ENCODE measurements at regions of chr6 and their contacts with region 1.

Region 1: GRCh38 chr6:131923356-131923755 is 27.8 kb downstream of the CCN2 start:
- DNase-seq: peak; percentile 80
- ATAC-seq: peak; percentile 91
- H3K4me3 ChIP-seq: no peak overlapping the region
- H3K27ac ChIP-seq: no peak overlapping the region
- H3K4me1 ChIP-seq: no peaks in the 10 kb centered on the region
- H3K27me3 ChIP-seq: no peaks in the 10 kb centered on the region
- CTCF ChIP-seq: peak; percentile 91
- EP300 ChIP-seq: no peak
- POLR2A ChIP-seq: no peak
- RAD21 ChIP-seq: peak; percentile 86

Region 2: GRCh38 chr6:131773284-131773950 is 149.9 kb before region 1 on chr6:
- CTCF ChIA-PET with region 1: no interaction called
- POLR2A ChIA-PET with region 1: no interaction called
- in situ Hi-C with region 1: no loop called
- intact Hi-C with region 1: no loop called
- DNase-seq: no peak
- ATAC-seq: no peak
- H3K4me3 ChIP-seq: no peak overlapping the region
- H3K27ac ChIP-seq: no peak overlapping the region
- H3K4me1 ChIP-seq: peaks cover 65% of the 10 kb centered on the region
- H3K27me3 ChIP-seq: no peaks in the 10 kb centered on the region
- CTCF ChIP-seq: no peak
- EP300 ChIP-seq: no peak
- POLR2A ChIP-seq: no peak
- RAD21 ChIP-seq: no peak

Region 3: GRCh38 chr6:131966443-131966842 is 43.1 kb after region 1 on chr6:
- CTCF ChIA-PET with region 1: no interaction called
- POLR2A ChIA-PET with region 1: no interaction called
- in situ Hi-C with region 1: no loop called
- intact Hi-C with region 1: no loop called
- DNase-seq: no peak
- ATAC-seq: no peak
- H3K4me3 ChIP-seq: no peak overlapping the region
- H3K27ac ChIP-seq: no peak overlapping the region
- H3K4me1 ChIP-seq: peaks cover 50% of the 10 kb centered on the region
- H3K27me3 ChIP-seq: no peaks in the 10 kb centered on the region
- CTCF ChIP-seq: no peak
- EP300 ChIP-seq: no peak
- POLR2A ChIP-seq: no peak
- RAD21 ChIP-seq: no peak

Region 4: GRCh38 chr6:131979515-131980337 is 56.4 kb after region 1 on chr6:
- CTCF ChIA-PET with region 1: no interaction called
- POLR2A ChIA-PET with region 1: no interaction called
- in situ Hi-C with region 1: no loop called
- intact Hi-C with region 1: loop called (anchors 1 kb)
- DNase-seq: no peak
- ATAC-seq: no peak
- H3K4me3 ChIP-seq: no peak overlapping the region
- H3K27ac ChIP-seq: peak overlapping the region; percentile 98
- H3K4me1 ChIP-seq: peaks cover 97% of the 10 kb centered on the region
- H3K27me3 ChIP-seq: no peaks in the 10 kb centered on the region
- CTCF ChIP-seq: no peak
- EP300 ChIP-seq: no peak
- POLR2A ChIP-seq: no peak
- RAD21 ChIP-seq: no peak

Region 5: DNA sequence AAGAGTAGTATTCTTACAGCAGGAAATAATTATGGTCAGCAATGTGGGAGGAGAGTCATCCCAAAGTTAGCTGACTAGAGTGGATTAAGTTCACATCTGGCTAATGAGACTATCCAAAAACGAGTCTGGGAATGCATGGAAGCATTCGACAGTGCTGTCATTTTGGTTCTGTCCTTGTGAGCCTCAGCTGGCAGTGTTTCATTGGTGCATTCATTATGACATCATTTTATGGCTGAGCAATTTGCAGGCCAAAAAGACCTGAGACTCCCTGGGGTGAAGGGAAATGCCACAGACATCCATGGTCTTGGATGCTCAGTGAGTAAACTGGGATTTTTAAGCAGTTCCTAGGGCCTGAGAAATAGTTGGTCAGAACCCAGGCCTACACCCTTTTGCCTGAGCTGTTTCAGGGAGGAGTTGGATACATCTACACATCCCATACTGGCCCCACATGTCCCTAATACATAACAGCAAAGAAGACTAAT is 224.2 kb after region 1 on chr6:
- CTCF ChIA-PET with region 1: no interaction called
- POLR2A ChIA-PET with region 1: no interaction called
- in situ Hi-C with region 1: no loop called
- intact Hi-C with region 1: no loop called
- DNase-seq: no peak
- ATAC-seq: no peak
- H3K4me3 ChIP-seq: no peak overlapping the region
- H3K27ac ChIP-seq: no peak overlapping the region
- H3K4me1 ChIP-seq: no peaks in the 10 kb centered on the region
- H3K27me3 ChIP-seq: peaks cover 0 to 3% of the 10 kb centered on the region in 2 experiments; a peak in 1 of 5 replicates
- CTCF ChIP-seq: no peak
- EP300 ChIP-seq: no peak
- POLR2A ChIP-seq: no peak
- RAD21 ChIP-seq: no peak

Region 6: DNA sequence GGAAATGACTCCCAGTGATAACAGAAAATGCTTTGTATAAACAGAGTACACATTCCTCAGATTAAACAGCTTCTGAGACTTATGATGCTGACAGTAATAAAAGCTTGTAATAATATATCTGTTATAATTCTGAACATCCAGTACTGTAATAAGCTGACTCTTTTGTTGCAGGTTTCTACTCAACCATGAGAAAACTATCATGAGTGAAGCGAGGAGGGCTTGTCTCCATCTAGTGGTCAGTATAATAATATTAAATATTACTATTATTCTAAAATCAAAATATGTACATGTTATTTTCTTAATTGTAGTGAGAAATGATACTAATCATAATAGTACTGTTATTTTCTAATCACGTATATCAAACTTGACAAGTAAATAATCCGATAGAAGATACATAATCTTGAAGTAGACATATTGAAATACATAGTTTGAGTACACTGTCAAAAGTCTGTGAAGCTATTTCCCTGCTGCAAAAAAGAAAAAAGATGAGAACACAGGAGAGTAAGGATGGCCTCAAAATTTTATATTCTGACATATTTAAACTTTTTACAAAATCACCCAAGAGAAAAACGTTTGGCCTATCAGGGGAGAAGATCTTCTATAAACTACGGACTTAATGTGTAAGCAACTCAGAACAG is 294.8 kb after region 1 on chr6:
- CTCF ChIA-PET with region 1: interaction called, 95 read pairs
- POLR2A ChIA-PET with region 1: no interaction called
- in situ Hi-C with region 1: loop called (anchors 5 kb)
- intact Hi-C with region 1: loop called (anchors 1 kb)
- DNase-seq: peak; percentile 25
- ATAC-seq: no peak
- H3K4me3 ChIP-seq: no peak overlapping the region
- H3K27ac ChIP-seq: no peak overlapping the region
- H3K4me1 ChIP-seq: no peaks in the 10 kb centered on the region
- H3K27me3 ChIP-seq: peaks cover 0 to 6% of the 10 kb centered on the region in 2 experiments; a peak in 2 of 5 replicates
- CTCF ChIP-seq: peak; percentile 44
- EP300 ChIP-seq: no peak
- POLR2A ChIP-seq: no peak
- RAD21 ChIP-seq: peak; percentile 55

Region 7: DNA sequence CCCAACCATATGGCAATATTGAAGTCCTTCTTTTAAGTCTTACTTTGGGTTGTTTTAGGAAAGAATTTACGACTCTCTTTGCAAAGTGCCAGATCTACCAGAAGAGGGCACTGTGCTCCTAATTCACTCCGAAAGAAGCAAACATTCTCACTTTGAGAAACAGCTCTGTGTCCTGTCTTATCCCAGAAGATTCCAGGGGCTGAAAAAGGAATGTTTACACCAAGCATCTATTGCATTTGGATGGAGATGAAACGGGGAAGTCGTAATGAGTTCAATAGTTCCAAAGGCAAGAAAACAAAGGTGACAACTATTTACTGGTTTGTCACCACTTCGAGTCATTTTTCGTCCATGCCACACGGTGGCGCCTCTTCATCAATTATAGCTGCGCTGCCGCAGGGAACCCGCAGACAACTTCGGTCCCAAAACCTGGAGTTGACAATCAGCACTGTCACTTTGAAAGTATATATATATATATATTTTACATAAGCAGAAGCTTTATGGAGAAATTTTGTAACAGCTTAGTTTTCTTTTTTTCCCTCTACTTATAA is 356.3 kb after region 1 on chr6:
- CTCF ChIA-PET with region 1: interaction called, 26 read pairs
- POLR2A ChIA-PET with region 1: no interaction called
- in situ Hi-C with region 1: no loop called
- intact Hi-C with region 1: loop called (anchors 5 kb)
- DNase-seq: peak; percentile 78
- ATAC-seq: peak; percentile 93
- H3K4me3 ChIP-seq: peak overlapping the region; percentile 35 to 70 (median 63); a peak in 4 of 6 replicates
- H3K27ac ChIP-seq: no peak overlapping the region
- H3K4me1 ChIP-seq: no peaks in the 10 kb centered on the region
- H3K27me3 ChIP-seq: peaks cover 3 to 20% of the 10 kb centered on the region in 2 experiments; a peak in 3 of 5 replicates
- CTCF ChIP-seq: peak; percentile 90
- EP300 ChIP-seq: no peak
- POLR2A ChIP-seq: no peak
- RAD21 ChIP-seq: peak; percentile 89

Region 8: DNA sequence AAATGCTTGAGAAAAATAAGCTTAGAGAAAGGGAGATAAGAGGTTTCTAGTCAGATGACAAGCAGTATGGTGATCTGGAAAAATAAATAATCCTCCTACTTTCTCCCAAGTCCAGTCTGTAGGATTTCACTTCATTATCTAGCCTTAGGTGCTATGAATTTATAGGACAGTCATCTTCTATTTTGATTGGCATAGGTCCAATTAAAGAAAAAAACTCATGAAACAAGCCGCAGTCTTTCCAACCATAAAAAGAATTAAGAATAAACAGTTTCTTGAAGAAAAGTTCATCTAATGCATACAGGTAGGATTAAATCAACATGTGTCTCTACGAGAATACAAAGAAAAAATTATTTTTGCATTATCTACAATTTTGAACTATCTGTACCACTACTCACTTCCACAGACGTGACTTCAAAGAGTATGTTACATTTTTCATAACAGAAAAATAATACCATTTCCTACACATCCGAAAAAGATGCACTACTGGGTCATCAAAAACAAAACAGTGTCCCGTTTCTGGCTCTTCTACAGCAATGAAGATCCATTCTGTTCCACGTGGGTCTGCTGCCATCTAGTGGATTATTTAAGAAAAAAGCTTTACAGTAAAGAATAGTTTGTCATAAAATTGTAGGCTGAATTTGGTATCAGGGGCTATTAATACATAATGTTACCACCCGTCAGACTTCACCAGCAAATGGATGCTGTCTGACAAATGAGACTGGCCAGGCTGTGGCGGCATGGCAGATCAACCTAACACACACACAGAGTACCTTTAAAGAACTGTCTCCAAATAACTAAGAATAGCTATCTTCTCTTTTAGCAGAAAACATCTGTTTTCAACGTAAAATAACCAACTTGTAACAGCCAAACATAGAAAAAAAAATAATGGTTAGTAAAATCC is 560.7 kb after region 1 on chr6:
- CTCF ChIA-PET with region 1: interaction called, 4 read pairs
- POLR2A ChIA-PET with region 1: no interaction called
- in situ Hi-C with region 1: loop called (anchors 10 kb)
- intact Hi-C with region 1: loop called (anchors 10 kb)
- DNase-seq: peak; percentile 75
- ATAC-seq: peak; percentile 88
- H3K4me3 ChIP-seq: no peak overlapping the region
- H3K27ac ChIP-seq: no peak overlapping the region
- H3K4me1 ChIP-seq: no peaks in the 10 kb centered on the region
- H3K27me3 ChIP-seq: no peaks in the 10 kb centered on the region
- CTCF ChIP-seq: peak; percentile 83
- EP300 ChIP-seq: no peak
- POLR2A ChIP-seq: no peak
- RAD21 ChIP-seq: peak; percentile 85

Measured in HepG2 (cell line).